Right ventricle myocardium inferior (tissue), 1 donor: ENCODE measurements at regions of chr1 and their contacts with region 1.

Region 1: GRCh38 chr1:28886731-28887418 is 27.5 kb upstream of the EPB41 start:
- DNase-seq: peak; percentile 93
- ATAC-seq: peak; percentile 79

Region 2: GRCh38 chr1:28835237-28835650 is 51.6 kb before region 1 on chr1:
- intact Hi-C with region 1: no loop called
- DNase-seq: no peak
- ATAC-seq: peak; percentile 64

Region 3: DNA sequence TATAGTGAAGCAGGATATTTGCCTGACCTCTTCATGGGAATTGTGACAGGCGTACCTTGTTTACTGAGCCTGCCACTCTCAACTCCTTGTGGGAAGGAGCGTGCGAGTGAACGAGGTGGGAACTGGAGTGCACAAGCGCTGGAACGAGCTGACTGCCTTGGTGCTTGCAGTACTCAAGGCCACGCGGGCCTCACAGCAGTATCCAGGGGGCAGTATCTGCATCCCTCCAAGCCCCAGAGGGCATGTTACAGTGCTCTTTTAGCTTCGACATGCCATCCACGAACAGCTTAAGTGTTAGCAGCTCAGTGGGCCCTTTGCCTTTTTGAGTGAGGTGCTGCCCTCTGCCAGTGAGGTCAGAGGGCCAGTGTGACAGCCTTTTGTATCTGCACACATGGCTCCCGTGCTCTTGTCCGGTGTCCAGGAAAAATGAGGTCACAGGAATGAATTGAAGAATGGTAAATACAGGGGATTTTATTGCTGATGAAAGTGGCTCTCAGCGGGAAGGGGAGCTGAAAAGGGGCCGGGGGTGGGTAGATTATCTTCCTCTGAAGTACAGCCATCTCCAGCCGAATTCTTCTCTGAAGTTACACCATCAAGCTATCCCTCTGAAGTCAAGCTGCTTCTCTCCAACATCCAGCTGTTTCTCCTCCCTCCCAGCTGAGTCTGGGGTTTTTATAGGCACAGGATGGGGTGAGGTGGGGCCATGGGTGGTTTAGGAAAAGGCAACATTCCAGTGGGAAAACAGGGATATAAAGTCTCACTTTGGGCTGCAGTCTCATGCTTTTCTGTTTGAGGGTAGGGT is 96.8 kb after region 1 on chr1:
- intact Hi-C with region 1: loop called (anchors 5 kb)
- DNase-seq: peak; percentile 56
- ATAC-seq: peak; percentile 91

Region 4: GRCh38 chr1:29033829-29034466 is 147.1 kb after region 1 on chr1:
- intact Hi-C with region 1: loop called (anchors 1 kb)
- DNase-seq: no peak
- ATAC-seq: no peak

Region 5: GRCh38 chr1:29181413-29182225 is 294.7 kb after region 1 on chr1 and contains the start of gene SRSF4:
- intact Hi-C with region 1: loop called (anchors 5 kb)
- DNase-seq: peak; percentile 100
- ATAC-seq: peak; percentile 97
- total RNA-seq, gene SRSF4: 52.4 TPM

Region 6: GRCh38 chr1:29202584-29203340 is 315.9 kb after region 1 on chr1:
- intact Hi-C with region 1: loop called (anchors 1 kb)
- DNase-seq: peak; percentile 95
- ATAC-seq: peak; percentile 94